Activated CD4-positive, alpha-beta T cell treated with anti-CD3 and anti-CD28 coated beads, Interleukin-2, amount 10 ng/mL, durations not matched to agents 24 days and 14 days (primary cell): ENCODE measurements at regions of chr4 and their contacts with region 1.

Region 1: GRCh38 chr4:111890412-111890811 is 254.8 kb upstream of the FAM241A start:
- DNase-seq: no peak
- H3K4me3 Mint-ChIP-seq: no peak overlapping the region
- H3K27ac Mint-ChIP-seq: no peak overlapping the region
- H3K4me1 Mint-ChIP-seq: no peaks in the 10 kb centered on the region
- H3K27me3 Mint-ChIP-seq: no peaks in the 10 kb centered on the region

Region 2: DNA sequence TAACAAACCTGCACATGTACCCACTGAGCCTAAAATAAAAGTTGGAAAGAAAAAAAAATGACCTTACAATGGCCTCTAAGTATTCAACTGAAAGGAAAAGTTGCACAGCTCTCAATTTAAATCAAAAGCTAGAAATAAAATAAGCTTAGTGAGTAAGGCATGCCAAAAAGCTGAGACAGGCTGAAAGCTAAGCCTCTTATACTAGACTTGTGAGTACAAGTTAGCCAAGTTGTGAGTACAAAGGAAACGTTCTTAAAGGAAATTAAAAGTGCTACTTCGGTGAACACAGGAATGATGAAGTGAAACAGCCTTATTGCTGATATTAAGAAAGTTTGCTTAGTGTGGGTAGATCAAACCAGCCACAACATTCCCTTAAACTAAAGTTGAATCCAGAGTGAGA is 559.6 kb before region 1 on chr4:
- intact Hi-C with region 1: loop called (anchors 10 kb)
- DNase-seq: no peak
- H3K4me3 Mint-ChIP-seq: no peak overlapping the region
- H3K27ac Mint-ChIP-seq: no peak overlapping the region
- H3K4me1 Mint-ChIP-seq: no peaks in the 10 kb centered on the region
- H3K27me3 Mint-ChIP-seq: no peaks in the 10 kb centered on the region

Region 3: DNA sequence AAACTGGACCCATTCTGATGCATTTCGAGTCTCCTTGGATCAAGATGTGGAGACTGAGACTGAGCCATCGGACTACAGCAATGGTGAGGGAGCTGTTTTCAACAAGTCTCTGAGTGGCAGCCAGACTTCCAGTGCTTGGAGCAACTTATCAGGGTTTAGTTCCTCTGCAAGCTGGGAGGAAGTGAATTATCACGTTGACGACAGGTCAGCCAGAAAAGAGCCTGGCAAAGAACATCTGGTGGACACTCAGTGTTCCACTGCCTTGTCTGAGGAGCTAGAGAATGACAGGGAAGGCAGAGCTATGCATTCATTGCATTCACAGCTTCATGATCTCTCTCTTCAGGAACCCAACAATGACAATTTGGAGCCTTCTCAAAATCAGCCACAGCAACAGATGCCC is 540.7 kb after region 1 on chr4:
- intact Hi-C with region 1: no loop called
- DNase-seq: no peak
- H3K4me3 Mint-ChIP-seq: no peak overlapping the region
- H3K27ac Mint-ChIP-seq: no peak overlapping the region
- H3K4me1 Mint-ChIP-seq: no peaks in the 10 kb centered on the region
- H3K27me3 Mint-ChIP-seq: no peaks in the 10 kb centered on the region